Activated CD4-positive, alpha-beta memory T cell treated with anti-CD3 and anti-CD28 coated beads for 36 hours (primary cell): ENCODE measurements at regions of chrX and their contacts with region 1.

Region 1: GRCh38 chrX:135384161-135384836 is 37.4 kb upstream of the SMIM10L2A start:
- DNase-seq: peak; percentile 54
- H3K4me3 Mint-ChIP-seq: peak overlapping the region; percentile 37
- H3K27ac Mint-ChIP-seq: peak overlapping the region; percentile 64
- H3K4me1 Mint-ChIP-seq: peaks cover 41% of the 10 kb centered on the region
- H3K27me3 Mint-ChIP-seq: no peaks in the 10 kb centered on the region

Region 2: GRCh38 chrX:135421537-135421931 is 37.2 kb after region 1 on chrX:
- CTCF ChIA-PET with region 1: no interaction called
- POLR2A ChIA-PET with region 1: no interaction called
- intact Hi-C with region 1: loop called (anchors 5 kb)
- DNase-seq: peak; percentile 91
- H3K4me3 Mint-ChIP-seq: peak overlapping the region; percentile 59
- H3K27ac Mint-ChIP-seq: no peak overlapping the region
- H3K4me1 Mint-ChIP-seq: peaks cover 4% of the 10 kb centered on the region
- H3K27me3 Mint-ChIP-seq: no peaks in the 10 kb centered on the region